ENCODE measurements at regions of chr5 and their contacts with region 1.

Region 1: GRCh38 chr5:170466988-170467707 is 36.7 kb upstream of the KCNIP1 start:
- DNase-seq: peak; percentile 90 to 97 (median 95)
- H3K4me3 ChIP-seq: no peak overlapping the region
- H3K4me3 Mint-ChIP-seq: no peak overlapping the region
- H3K27ac ChIP-seq: peak overlapping the region; percentile 40 to 79
- H3K27ac Mint-ChIP-seq: no peak overlapping the region
- H3K4me1 ChIP-seq: peaks cover 36 to 41% of the 10 kb centered on the region in 2 donors
- H3K4me1 Mint-ChIP-seq: peaks cover 24% of the 10 kb centered on the region
- H3K27me3 ChIP-seq: peaks cover 0 to 3% of the 10 kb centered on the region in 2 donors
- H3K27me3 Mint-ChIP-seq: peaks cover under 1 to 3% (median 2%) of the 10 kb centered on the region in 3 donors
- CTCF ChIP-seq: no peak

Region 2: DNA sequence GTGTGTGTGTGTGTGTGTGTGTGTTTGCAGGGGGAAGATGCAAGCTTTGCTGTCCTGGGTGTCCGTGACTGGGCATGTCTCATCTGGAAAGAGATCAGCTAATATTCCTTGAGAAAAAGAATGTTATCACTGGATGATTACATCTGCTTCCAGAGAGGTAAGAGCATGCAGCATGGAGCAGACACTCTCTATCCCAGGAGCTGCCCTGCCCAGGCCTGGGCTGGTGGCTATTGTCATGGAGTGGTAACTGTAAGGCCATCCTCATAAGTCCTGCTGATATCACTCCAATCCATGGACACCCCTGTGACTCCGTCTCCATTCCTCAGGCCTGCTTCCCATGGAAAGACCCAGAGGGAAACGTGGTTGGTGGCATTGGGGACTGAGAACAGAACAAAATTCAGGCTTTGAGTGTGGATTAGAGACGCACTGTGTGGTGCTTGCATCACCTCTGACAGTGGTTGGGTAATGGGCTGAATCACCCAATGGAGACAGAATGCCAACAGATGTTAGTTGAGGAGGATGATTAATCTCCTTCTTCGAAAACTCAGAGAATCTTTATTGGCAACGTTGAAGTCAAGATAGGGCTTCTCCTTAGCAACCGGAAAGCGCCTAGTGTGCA is 15.3 kb before region 1 on chr5:
- intact Hi-C with region 1: loop called in 1 of 2 experiments (anchors 2 kb)
- DNase-seq: peak; percentile 83 to 93 (median 89)
- H3K4me3 ChIP-seq: no peak overlapping the region
- H3K4me3 Mint-ChIP-seq: no peak overlapping the region
- H3K27ac ChIP-seq: peak overlapping the region; percentile 37 to 81
- H3K27ac Mint-ChIP-seq: peak overlapping the region; percentile 74 to 94 (median 88)
- H3K4me1 ChIP-seq: peaks cover 19 to 20% of the 10 kb centered on the region in 2 donors
- H3K4me1 Mint-ChIP-seq: peaks cover 25% of the 10 kb centered on the region
- H3K27me3 ChIP-seq: no peaks in the 10 kb centered on the region
- H3K27me3 Mint-ChIP-seq: peaks cover 0 to 2% (median 0%) of the 10 kb centered on the region in 3 donors
- CTCF ChIP-seq: no peak

Region 3: GRCh38 chr5:170504031-170504596 is 37.0 kb after region 1 on chr5:
- intact Hi-C with region 1: loop called in 1 of 2 experiments (anchors 5 kb)
- DNase-seq: peak in 2 of 3 donors; percentile 15 to 27
- H3K4me3 ChIP-seq: peak overlapping the region in 1 of 3 experiments; percentile 55
- H3K4me3 Mint-ChIP-seq: peak overlapping the region in 1 of 2 donors; percentile 82
- H3K27ac ChIP-seq: no peak overlapping the region
- H3K27ac Mint-ChIP-seq: no peak overlapping the region
- H3K4me1 ChIP-seq: peaks cover 17 to 19% of the 10 kb centered on the region in 2 donors
- H3K4me1 Mint-ChIP-seq: peaks cover 32% of the 10 kb centered on the region
- H3K27me3 ChIP-seq: peaks cover 9 to 31% of the 10 kb centered on the region in 2 donors
- H3K27me3 Mint-ChIP-seq: peaks cover 33 to 49% (median 42%) of the 10 kb centered on the region in 3 donors
- CTCF ChIP-seq: no peak

Measured in CD14-positive monocyte (primary cell).